Posterior cingulate gyrus (tissue), 11 donors: ENCODE measurements at regions of chr14 and their contacts with region 1.

Region 1: GRCh38 chr14:63641473-63642228 is at the start of gene WDR89:
- DNase-seq: peak; percentile 95 to 100 (median 98)

Region 2: GRCh38 chr14:63543000-63543825 is 98.4 kb before region 1 on chr14 and contains the start of gene PPP2R5E:
- intact Hi-C with region 1: loop called (anchors 1 kb)
- DNase-seq: peak; percentile 97 to 100 (median 98)

Region 3: DNA sequence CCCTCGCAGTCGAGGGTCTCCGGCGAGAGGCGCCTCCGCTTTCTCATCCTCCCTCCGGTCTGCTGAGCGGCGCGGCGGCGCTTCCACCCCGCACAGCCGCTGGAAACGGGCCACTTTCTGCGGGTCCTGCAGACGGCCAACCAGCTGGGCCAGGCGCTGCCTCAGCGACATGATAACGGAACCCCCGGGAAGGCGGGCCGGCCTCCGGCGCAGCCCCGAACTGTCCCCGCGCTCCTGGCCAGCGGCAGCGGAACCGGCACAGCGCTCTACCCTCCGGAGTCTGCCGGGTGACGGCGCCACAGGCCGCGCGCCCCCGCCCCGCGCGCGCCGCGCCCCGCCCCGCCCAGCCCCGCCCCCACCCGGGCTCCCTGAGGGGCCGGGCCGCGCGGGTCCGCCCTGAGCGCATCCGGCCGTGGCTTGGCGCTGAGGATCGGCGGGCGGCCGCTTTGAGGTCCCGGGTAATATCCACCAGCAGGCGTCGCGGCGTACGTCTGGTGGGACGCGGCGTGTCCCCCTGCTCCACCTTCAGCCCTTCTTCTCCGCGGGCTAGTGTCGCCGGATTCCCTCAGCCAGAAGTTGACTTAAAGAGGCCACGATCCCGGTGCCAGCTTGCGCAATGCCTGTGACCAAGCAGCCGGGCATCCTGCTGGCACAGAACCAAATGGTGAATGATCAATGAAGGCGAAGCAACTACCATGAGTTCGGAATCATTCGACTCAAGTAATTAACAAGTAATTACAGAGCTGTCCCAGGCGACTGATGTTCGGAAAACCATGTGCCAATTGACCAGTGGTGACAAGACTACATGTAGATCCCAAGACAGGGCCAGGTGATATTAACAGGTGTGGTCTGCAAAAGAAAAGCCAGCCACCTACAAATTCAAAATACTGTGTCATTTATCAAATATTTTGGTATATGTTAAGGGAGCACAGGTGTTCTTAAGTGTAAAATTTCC is 86.4 kb after region 1 on chr14 and contains the start of gene SGPP1:
- intact Hi-C with region 1: loop called (anchors 5 kb)
- DNase-seq: peak; percentile 44 to 95 (median 61)

Region 4: GRCh38 chr14:63760014-63760413 is 118.4 kb after region 1 on chr14:
- intact Hi-C with region 1: loop called (anchors 10 kb)
- DNase-seq: no peak

Region 5: DNA sequence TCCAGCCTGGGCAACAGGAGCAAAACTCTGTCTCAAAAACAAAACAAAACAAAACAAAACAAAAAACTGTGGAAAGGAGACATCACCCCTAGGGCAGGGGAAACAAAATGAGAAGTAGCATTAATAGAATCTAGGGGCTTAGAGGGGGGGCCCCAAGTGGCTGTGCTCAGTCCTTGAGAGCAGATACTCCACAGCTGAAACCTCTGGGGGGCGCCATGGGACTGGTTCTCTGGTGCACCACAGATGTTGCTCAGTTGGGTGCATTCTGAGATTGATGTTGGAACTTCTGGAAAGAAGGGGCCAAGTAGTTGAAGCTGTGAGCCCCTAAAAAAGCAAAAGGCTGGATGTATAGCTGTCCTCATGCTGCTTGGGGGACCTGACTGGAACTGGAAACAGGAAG is 199.3 kb after region 1 on chr14:
- intact Hi-C with region 1: no loop called
- DNase-seq: no peak